ENCODE measurements at regions of chr13 and their contacts with region 1.

Region 1: DNA sequence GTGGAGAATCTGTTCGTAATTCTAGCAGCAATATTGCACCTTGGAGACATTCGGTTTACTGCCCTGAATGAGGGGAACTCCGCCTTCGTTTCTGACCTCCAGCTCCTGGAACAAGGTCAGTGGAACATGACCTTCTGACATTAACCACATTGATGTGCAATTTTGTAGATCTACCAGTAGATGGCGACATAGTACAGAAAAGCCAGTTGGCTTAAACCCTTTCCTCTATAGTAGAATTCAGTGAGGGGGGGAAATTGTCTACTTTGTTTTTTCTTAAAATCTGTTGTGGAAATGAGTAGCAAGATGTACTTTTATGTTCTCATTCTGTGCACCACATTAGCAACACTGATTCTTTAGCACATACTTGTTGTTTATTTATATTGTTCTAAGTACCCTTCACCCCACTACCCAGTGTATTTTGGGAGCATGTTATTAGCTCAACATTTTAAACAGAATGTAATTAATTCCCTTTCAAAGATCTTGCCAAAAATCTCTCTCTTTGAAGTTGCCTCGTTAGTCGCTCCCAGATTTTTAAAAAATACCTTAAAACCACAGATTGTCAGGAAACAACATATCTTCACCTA is 332.2 kb downstream of the MYO16 start:
- DNase-seq: peak; percentile 50
- H3K4me3 ChIP-seq: no peak overlapping the region
- H3K27ac ChIP-seq: peak overlapping the region; percentile 18
- H3K4me1 ChIP-seq: peaks cover 39% of the 10 kb centered on the region
- H3K27me3 ChIP-seq: no peaks in the 10 kb centered on the region
- CTCF ChIP-seq: peak; percentile 77 to 79

Region 2: DNA sequence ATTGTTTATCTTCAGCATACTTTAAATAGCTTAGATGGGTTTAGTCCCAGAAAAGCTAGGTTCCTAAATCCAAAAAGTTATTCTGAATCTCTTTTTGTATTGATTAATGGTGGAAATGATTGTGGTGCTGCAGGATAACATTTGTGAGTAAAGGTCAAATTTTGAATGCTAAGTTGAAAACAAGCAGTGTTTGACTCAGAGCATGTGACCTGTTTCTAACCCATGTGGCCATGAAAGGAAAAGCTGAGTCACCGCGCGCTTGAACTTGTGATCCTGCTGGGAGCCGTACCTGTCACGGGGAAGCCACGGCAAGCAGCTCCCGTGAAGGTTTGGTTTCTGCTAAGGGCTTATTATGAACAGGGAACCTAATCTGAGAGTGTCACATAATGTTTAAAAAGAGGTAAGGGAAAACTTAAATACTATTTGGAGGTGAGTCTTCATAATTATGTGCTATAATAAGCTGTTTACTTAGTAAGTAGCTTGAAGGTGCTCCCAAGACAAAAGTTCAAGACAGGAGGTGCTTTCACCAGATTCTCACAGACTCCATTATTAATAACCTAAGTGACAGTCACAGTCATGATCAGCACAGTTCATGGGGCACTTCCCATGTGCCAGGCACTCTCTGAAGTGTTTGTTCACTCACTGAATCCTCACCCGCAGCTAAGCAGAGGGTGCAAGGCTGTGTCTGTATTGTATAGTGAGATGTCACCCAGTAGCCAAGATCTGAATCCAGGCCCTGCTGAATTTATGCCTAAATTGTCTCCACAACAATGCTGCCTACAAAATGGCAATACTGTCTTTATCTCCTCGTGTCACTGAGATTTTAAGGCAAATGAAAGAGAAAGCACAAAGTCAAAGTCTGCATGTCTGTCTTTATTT is 45.8 kb before region 1 on chr13:
- CTCF ChIA-PET with region 1: no interaction called
- dilution Hi-C with region 1: no loop called
- in situ Hi-C with region 1: no loop called
- intact Hi-C with region 1: loop called (anchors 1 kb)
- DNase-seq: peak; percentile 94
- H3K4me3 ChIP-seq: no peak overlapping the region
- H3K27ac ChIP-seq: peak overlapping the region; percentile 50
- H3K4me1 ChIP-seq: peaks cover 25% of the 10 kb centered on the region
- H3K27me3 ChIP-seq: no peaks in the 10 kb centered on the region
- CTCF ChIP-seq: no peak

Region 3: DNA sequence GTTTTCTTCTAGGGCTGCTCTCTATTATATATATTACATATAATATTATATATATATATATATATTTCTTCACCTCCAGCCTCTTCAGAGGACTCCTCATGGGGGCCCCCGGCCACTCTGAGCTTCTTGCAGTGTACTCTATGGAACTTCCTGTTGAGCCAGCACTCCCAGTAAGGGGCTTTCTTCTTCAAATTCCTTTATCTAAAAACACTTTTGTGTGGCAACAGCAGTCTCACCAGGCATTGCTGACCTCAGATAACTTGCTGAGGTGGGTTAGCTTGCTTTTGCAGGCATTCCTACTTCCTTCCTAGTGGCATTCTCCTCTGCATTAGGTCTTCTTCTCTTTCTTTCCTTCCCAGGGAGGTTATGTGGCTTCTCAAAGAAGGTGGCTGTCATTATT is 49.3 kb after region 1 on chr13:
- CTCF ChIA-PET with region 1: no interaction called
- dilution Hi-C with region 1: no loop called
- in situ Hi-C with region 1: no loop called
- intact Hi-C with region 1: no loop called
- DNase-seq: no peak
- H3K4me3 ChIP-seq: no peak overlapping the region
- H3K27ac ChIP-seq: no peak overlapping the region
- H3K4me1 ChIP-seq: no peaks in the 10 kb centered on the region
- H3K27me3 ChIP-seq: no peaks in the 10 kb centered on the region
- CTCF ChIP-seq: no peak

Region 4: DNA sequence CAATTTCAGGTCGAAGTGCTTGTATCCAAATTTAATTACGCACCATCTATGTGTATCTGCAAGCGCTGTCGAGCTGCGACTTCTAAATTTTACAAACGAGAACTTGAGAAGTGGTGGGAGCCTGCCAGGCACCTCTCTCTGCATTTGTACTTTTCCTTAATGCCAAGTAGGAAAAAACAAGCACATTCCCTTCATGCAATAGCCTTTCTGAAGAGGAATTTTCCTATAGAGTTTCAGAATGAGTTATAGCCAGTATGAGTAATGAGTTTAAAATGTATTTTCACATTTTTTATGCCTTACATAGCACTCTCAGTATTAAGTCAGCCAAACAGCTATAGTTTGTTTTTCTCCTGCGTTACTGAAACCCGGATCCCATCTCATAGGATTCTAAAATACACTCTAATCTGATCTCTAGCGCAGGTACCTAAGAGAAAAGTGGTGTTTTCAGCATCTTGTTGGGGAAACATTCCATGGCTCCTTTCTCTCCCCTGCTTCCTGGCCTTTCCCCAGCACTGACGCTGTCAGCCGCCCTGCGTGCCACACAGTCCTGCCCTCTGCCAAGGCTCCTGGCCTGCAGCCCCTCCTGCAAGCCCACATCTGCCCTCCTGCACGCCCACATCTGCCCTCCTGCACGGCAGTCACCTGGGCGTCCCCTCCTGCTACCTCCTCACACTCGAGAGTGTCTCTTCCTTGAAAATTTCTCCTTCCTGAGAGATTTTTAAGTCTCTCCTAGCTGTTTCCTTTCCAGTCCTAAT is 194.7 kb after region 1 on chr13:
- CTCF ChIA-PET with region 1: no interaction called
- dilution Hi-C with region 1: no loop called
- in situ Hi-C with region 1: loop called in 1 of 2 experiments (anchors 10 kb)
- intact Hi-C with region 1: no loop called
- DNase-seq: peak; percentile 84
- H3K4me3 ChIP-seq: peak overlapping the region; percentile 15 to 33 (median 30)
- H3K27ac ChIP-seq: peak overlapping the region; percentile 98
- H3K4me1 ChIP-seq: peaks cover 69% of the 10 kb centered on the region
- H3K27me3 ChIP-seq: no peaks in the 10 kb centered on the region
- CTCF ChIP-seq: no peak

Region 5: GRCh38 chr13:109436055-109436622 is 474.5 kb after region 1 on chr13:
- CTCF ChIA-PET with region 1: no interaction called
- dilution Hi-C with region 1: no loop called
- in situ Hi-C with region 1: no loop called
- intact Hi-C with region 1: loop called (anchors 5 kb)
- DNase-seq: peak; percentile 98
- H3K4me3 ChIP-seq: peak overlapping the region in 1 of 3 experiments; percentile 7
- H3K27ac ChIP-seq: peak overlapping the region; percentile 65
- H3K4me1 ChIP-seq: peaks cover 26% of the 10 kb centered on the region
- H3K27me3 ChIP-seq: no peaks in the 10 kb centered on the region
- CTCF ChIP-seq: no peak

Region 6: DNA sequence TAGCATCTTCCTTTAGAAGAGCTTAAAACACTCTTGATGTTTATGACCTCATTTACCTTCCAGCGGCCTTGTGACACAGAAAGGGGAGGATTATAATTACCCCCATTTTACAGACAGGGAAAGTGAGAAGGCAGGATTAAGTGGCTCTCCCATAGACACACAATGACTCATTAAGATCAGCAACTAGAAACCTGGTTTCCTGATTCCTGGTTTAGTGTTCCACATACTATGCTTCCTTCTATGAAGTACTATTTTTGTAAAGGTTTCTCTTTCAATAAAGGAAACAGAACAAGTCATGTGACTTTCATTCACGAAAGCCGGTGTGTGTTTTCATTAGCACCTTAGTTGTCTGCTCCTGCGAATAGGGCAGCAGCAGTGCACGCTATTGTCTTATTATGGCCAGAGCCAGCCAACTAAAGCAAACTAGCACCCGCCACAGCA is 816.5 kb after region 1 on chr13:
- CTCF ChIA-PET with region 1: no interaction called
- dilution Hi-C with region 1: no loop called
- in situ Hi-C with region 1: loop called (anchors 5 to 10 kb)
- intact Hi-C with region 1: no loop called
- DNase-seq: peak; percentile 59
- H3K4me3 ChIP-seq: peak overlapping the region in 2 of 3 experiments; percentile 56 to 58
- H3K27ac ChIP-seq: peak overlapping the region; percentile 22
- H3K4me1 ChIP-seq: peaks cover 46% of the 10 kb centered on the region
- H3K27me3 ChIP-seq: no peaks in the 10 kb centered on the region
- CTCF ChIP-seq: no peak

Region 7: DNA sequence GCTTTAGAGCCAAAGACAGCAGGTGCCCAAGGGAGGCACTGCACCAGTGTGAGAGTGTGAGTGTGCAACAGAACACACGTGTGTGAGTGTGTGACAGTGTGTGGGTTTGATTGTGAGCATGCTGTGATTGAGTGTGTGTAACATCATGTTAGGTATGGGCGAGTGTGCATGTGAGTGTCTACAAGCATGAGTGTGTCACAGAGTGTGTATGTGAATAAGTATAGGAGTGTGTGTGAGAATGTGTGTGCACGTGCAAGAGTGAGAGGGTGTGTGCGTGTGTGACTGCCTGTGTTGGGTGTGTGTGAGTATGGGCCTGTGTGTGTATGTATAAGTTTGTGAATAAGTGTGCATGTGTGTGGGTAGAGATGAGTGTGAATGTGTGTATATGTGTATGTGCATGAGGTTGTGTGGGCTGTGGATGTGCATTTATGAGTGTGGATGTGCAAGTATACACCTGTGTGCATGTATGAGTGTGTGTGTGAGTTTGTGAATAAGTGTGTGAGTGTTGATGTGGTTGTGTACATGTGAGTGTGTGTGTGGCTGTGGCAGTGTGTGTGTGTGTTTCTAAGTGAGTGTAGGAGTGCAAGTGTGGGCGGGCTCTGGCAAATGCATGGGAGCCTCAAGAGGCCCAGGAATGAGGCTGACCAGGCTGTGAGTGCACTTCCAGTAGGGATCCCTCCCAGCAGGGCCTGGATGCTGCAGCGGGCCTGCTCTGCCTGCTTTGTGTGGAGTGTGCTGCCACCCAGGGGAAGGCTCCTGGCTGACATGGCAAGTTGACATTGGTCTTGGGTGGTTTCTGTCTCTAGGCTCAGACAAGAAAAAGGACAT is 1146.9 kb after region 1 on chr13:
- CTCF ChIA-PET with region 1: interaction called, 3 read pairs
- dilution Hi-C with region 1: no loop called
- in situ Hi-C with region 1: loop called (anchors 5 kb)
- intact Hi-C with region 1: loop called (anchors 10 kb)
- DNase-seq: peak; percentile 78
- H3K4me3 ChIP-seq: no peak overlapping the region
- H3K27ac ChIP-seq: no peak overlapping the region
- H3K4me1 ChIP-seq: peaks cover 29% of the 10 kb centered on the region
- H3K27me3 ChIP-seq: no peaks in the 10 kb centered on the region
- CTCF ChIP-seq: peak; percentile 89 to 93

Measured in mammary epithelial cell (primary cell).